OCI-LY7 (cell line): ENCODE measurements at regions of chr17 and their contacts with region 1.

Region 1: GRCh38 chr17:30600049-30600829 is 123.0 kb downstream of the GOSR1 start:
- DNase-seq: peak; percentile 89
- H3K4me3 ChIP-seq: peak overlapping the region; percentile 77
- H3K27ac ChIP-seq: peak overlapping the region; percentile 88
- H3K4me1 ChIP-seq: peaks cover 21% of the 10 kb centered on the region
- CTCF ChIP-seq: peak; percentile 73

Region 2: GRCh38 chr17:30477083-30477773 is 123.0 kb before region 1 on chr17 and contains the start of gene GOSR1:
- CTCF ChIA-PET with region 1: no interaction called
- POLR2A ChIA-PET with region 1: no interaction called
- intact Hi-C with region 1: loop called (anchors 1 kb)
- DNase-seq: peak; percentile 96
- H3K4me3 ChIP-seq: peak within 1 kb of the TSS; percentile 88
- H3K27ac ChIP-seq: peak within 1 kb of the TSS; percentile 42
- H3K4me1 ChIP-seq: peaks cover 17% of the 10 kb centered on the region
- CTCF ChIP-seq: peak; percentile 84
- total RNA-seq, gene GOSR1: 15.9 and 17.0 TPM in 2 replicates

Region 3: DNA sequence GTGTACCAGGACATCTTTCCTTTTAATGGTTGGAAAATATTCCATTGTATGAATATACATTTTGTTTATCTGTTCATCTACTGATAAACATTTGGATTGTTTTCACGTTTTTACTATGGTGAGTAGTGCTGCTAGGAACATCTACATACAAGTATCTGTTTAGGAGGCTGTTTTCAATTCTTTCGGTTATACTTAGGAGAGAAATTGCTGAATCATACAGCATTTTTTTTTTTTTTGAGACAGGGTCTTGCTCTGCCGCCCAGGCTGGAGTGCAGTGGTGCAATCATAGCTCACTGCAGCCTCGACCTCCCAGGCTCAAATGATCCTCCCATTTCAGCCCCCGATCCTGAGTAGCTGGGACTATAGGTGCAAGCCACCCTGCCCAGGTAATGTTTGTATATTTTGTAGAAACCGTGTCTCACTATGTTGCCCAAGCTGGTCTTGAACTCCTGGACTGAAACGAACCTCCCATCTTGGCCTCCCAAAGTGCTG is 101.3 kb after region 1 on chr17:
- CTCF ChIA-PET with region 1: no interaction called
- POLR2A ChIA-PET with region 1: no interaction called
- intact Hi-C with region 1: loop called (anchors 5 kb)
- DNase-seq: no peak
- H3K4me3 ChIP-seq: no peak overlapping the region
- H3K27ac ChIP-seq: no peak overlapping the region
- H3K4me1 ChIP-seq: peaks cover 1% of the 10 kb centered on the region
- CTCF ChIP-seq: no peak

Region 4: GRCh38 chr17:30894236-30894635 is 294.0 kb after region 1 on chr17:
- CTCF ChIA-PET with region 1: no interaction called
- POLR2A ChIA-PET with region 1: no interaction called
- intact Hi-C with region 1: no loop called
- DNase-seq: no peak
- H3K4me3 ChIP-seq: no peak overlapping the region
- H3K27ac ChIP-seq: no peak overlapping the region
- H3K4me1 ChIP-seq: no peaks in the 10 kb centered on the region
- CTCF ChIP-seq: no peak